ENCODE measurements at regions of chr17 and their contacts with region 1.

Region 1: GRCh38 chr17:75012346-75013091 is at the start of gene MRPL58:
- DNase-seq: peak; percentile 94
- ATAC-seq: peak; percentile 81
- H3K4me3 Mint-ChIP-seq: peak within 1 kb of the TSS; percentile 73
- H3K27ac Mint-ChIP-seq: peak within 1 kb of the TSS; percentile 99
- H3K4me1 Mint-ChIP-seq: peaks cover 26% of the 10 kb centered on the region
- H3K27me3 Mint-ChIP-seq: no peaks in the 10 kb centered on the region
- CTCF ChIP-seq: no peak
- total RNA-seq, gene MRPL58: 41.8 to 43.7 TPM (median 41.9 TPM) in 3 replicates

Region 2: DNA sequence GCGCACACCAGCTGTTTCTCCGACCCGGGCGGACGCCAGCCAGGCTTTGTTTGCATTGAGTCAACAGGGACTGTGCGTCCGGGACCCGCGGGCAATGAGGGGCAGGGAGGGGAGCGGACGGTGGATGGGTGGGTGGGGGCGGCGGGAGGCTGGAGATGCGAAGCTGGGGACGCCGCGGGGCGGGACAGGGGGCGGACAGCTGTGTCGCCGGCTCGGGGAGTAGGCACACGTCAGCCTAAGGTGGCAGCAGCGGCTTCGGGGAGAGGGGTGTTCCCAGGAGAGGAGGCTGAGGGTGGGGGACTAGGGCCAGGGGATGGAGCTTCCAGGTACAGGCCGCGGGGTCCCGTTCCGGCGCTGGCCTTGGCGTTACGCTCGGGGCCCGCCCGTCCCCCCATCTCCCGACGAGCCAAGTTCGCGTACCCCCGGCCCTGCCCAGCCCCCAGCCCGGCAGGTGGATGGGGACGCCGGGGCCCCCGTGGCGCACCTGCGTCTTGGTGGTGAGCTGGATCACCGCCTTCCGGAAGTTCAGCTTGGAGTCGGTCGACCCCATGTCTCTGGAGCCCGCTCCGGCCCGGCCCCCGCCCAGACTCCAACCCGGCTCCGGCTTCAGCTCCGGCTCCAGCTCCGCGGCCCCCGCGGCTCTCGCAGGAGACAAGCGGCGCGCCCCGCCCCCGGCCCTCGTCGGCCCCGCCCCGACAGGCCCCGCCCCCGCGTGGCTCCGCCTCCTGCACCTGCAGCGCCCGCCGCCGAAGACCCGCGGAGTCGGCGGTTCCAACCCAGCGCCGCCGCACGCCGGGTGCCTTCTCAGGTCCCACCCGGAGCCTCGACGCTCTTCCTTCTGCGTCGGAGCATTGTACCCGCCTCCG is 40.2 kb before region 1 on chr17 and contains the start of gene HID1:
- CTCF ChIA-PET with region 1: interaction called, 35 read pairs
- POLR2A ChIA-PET with region 1: interaction called, 15 read pairs
- DNase-seq: peak; percentile 89
- ATAC-seq: peak; percentile 83
- H3K4me3 Mint-ChIP-seq: peak within 1 kb of the TSS; percentile 90
- H3K27ac Mint-ChIP-seq: no peak within 1 kb of the TSS
- H3K4me1 Mint-ChIP-seq: peaks cover 12% of the 10 kb centered on the region
- H3K27me3 Mint-ChIP-seq: peaks cover 55% of the 10 kb centered on the region
- CTCF ChIP-seq: no peak
- total RNA-seq, gene HID1: 16.7 to 19.4 TPM (median 19.3 TPM) in 3 replicates

Region 3: DNA sequence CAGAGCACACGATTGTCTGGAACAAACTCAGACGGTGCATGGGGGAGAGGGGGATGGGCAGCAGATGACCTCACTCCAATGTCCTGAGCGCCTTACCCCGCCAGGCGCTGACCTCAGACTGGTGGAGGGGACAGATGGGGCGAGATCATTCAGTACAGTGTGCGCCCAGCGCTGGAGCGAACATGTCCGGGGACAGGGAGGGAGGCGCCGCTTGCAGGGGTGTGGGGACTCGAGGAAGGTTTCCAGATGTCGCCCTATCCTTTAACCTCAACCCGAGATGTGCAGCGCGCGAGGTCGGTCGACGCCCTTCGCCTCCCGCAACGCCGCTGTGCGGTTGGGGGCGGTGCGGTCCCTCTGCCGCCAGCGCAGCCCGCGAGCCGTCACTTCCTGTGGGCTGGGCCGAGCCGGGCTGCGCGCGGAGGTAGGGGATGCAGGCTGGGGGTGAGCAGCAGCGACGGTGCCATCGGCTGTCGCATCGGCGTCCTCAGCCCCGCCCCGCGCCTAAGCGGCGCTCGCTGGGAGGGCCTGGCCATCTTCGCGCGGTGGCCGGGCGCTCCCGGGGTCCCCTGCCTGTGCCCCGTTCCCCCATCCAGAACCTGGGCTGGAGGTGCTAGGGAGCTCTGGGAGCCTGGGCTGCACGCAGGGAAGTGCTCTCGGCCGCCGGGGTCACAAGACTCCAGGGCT is 30.4 kb before region 1 on chr17:
- CTCF ChIA-PET with region 1: interaction called, 51 read pairs
- POLR2A ChIA-PET with region 1: interaction called, 30 read pairs
- DNase-seq: peak; percentile 86
- ATAC-seq: peak; percentile 94
- H3K4me3 Mint-ChIP-seq: peak overlapping the region; percentile 83
- H3K27ac Mint-ChIP-seq: peak overlapping the region; percentile 92
- H3K4me1 Mint-ChIP-seq: peaks cover 20% of the 10 kb centered on the region
- H3K27me3 Mint-ChIP-seq: peaks cover 33% of the 10 kb centered on the region
- CTCF ChIP-seq: no peak

Region 4: DNA sequence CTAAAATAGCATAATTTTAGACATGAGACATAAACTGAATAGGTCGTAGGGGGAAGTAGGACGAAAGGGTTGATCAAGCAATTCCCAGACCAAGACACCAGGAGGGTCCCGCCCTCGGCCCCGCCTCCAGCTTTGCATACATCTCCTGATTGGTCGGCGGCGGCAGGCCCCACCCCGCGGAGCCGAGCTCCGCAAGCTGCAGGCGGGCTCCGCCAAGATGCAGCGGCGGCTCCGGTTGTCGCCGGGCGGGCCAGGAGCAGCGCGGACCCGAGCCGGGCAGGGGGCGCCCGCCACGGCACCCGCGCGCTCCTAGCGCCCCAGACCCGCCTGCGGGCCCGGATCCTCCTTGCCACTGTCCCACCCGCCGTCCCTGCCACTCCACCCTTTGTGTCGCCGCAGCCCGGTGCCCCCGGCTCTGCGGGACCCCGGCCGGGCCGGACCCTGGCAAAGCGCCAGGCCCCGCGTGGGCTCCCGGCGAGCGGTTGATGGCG is 25.1 kb before region 1 on chr17 and contains the start of gene CDR2L:
- CTCF ChIA-PET with region 1: interaction called, 51 read pairs
- POLR2A ChIA-PET with region 1: interaction called, 30 read pairs
- DNase-seq: peak; percentile 98
- ATAC-seq: peak; percentile 90
- H3K4me3 Mint-ChIP-seq: peak within 1 kb of the TSS; percentile 97
- H3K27ac Mint-ChIP-seq: peak within 1 kb of the TSS; percentile 100
- H3K4me1 Mint-ChIP-seq: peaks cover 18% of the 10 kb centered on the region
- H3K27me3 Mint-ChIP-seq: peaks cover 2% of the 10 kb centered on the region; the same call in 1 of the 2 replicates
- CTCF ChIP-seq: no peak
- total RNA-seq, gene CDR2L: 28.6 to 31.3 TPM (median 31.0 TPM) in 3 replicates

Region 5: DNA sequence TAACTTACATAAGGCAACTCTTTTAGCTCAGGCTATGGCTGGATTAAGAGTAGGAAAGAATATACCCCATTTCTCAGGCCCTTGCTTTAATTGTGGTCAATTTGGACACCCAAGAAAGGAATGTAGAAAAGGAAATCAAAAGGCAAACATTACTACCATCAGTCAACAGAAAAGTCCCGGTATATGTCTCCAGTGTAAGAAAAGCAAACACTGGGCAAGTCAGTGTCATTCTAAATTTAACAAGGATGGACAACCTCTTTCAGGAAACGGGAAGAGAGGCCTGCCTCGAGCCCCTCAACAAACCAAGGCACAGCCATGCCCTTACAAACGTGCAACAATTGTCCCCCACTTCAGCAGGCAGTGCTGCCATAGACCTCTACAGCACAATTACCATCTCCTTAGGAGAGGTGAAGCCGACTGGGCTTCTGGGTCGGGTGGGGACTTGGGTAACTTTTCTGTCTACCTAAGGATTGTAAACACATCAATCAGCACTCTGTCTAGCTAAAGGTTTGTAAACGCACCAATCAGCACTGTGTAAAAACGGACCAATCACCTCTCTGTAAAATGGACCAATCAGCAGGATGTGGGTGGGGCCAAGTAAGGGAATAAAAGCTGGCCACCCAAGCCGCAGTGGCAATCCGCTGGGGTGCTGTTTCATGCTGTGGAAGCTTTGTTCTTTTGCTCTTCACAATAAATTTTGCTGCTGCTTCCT is 12.3 kb after region 1 on chr17:
- CTCF ChIA-PET with region 1: interaction called, 21 read pairs
- POLR2A ChIA-PET with region 1: no interaction called
- DNase-seq: no peak
- ATAC-seq: no peak
- H3K4me3 Mint-ChIP-seq: no peak overlapping the region
- H3K27ac Mint-ChIP-seq: no peak overlapping the region
- H3K4me1 Mint-ChIP-seq: no peaks in the 10 kb centered on the region
- H3K27me3 Mint-ChIP-seq: peaks cover 9% of the 10 kb centered on the region
- CTCF ChIP-seq: no peak

Region 6: GRCh38 chr17:75034236-75034908 is 21.9 kb after region 1 on chr17:
- CTCF ChIA-PET with region 1: interaction called, 18 read pairs
- POLR2A ChIA-PET with region 1: interaction called, 24 read pairs
- DNase-seq: peak; percentile 96
- ATAC-seq: peak; percentile 42
- H3K4me3 Mint-ChIP-seq: peak overlapping the region; percentile 99
- H3K27ac Mint-ChIP-seq: peak overlapping the region; percentile 94
- H3K4me1 Mint-ChIP-seq: peaks cover 26% of the 10 kb centered on the region
- H3K27me3 Mint-ChIP-seq: peaks cover 26% of the 10 kb centered on the region
- CTCF ChIP-seq: no peak

Region 7: DNA sequence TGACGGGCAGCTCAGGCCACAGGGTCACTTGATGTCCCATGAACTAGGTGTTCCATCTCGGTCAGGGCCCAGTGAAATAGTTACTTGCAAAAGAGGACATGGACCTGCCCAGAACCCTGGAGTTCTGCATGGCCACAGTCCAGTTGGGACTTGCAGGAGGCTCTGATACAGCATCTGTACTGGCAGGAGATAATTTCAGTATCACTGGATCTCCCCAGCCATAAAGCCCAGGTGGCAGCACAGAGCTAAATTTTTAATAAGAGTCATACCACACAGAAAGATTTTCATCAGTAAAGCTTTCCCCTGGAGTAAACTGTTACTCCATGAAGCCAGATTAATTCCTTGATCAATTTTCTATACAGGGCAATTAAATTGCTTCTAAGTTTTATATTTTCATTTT is 57.3 kb after region 1 on chr17:
- CTCF ChIA-PET with region 1: no interaction called
- POLR2A ChIA-PET with region 1: no interaction called
- DNase-seq: no peak
- ATAC-seq: no peak
- H3K4me3 Mint-ChIP-seq: no peak overlapping the region
- H3K27ac Mint-ChIP-seq: 0 out of 2 replicates have a peak overlapping the region, but pooled peaks have one; percentile 49
- H3K4me1 Mint-ChIP-seq: no peaks in the 10 kb centered on the region
- H3K27me3 Mint-ChIP-seq: no peaks in the 10 kb centered on the region
- CTCF ChIP-seq: no peak

Region 8: GRCh38 chr17:75205037-75205792 is 192.7 kb after region 1 on chr17 and contains the start of gene NUP85:
- CTCF ChIA-PET with region 1: interaction called, 11 read pairs
- POLR2A ChIA-PET with region 1: interaction called, 6 read pairs
- DNase-seq: peak; percentile 95
- ATAC-seq: peak; percentile 89
- H3K4me3 Mint-ChIP-seq: peak within 1 kb of the TSS; percentile 92
- H3K27ac Mint-ChIP-seq: peak within 1 kb of the TSS; percentile 100
- H3K4me1 Mint-ChIP-seq: peaks cover 14% of the 10 kb centered on the region
- H3K27me3 Mint-ChIP-seq: no peaks in the 10 kb centered on the region
- CTCF ChIP-seq: no peak
- total RNA-seq, gene NUP85: 89.7 to 109 TPM (median 95.1 TPM) in 3 replicates

Measured in WTC11 (cell line).